Activated naive CD4-positive, alpha-beta T cell treated with anti-CD3 and anti-CD28 coated beads for 36 hours (primary cell): ENCODE measurements at regions of chr4 and their contacts with region 1.

Region 1: GRCh38 chr4:4524364-4524763 is 17.5 kb downstream of the STX18 start:
- DNase-seq: peak; percentile 23
- H3K4me3 Mint-ChIP-seq: no peak overlapping the region
- H3K27ac Mint-ChIP-seq: no peak overlapping the region
- H3K4me1 Mint-ChIP-seq: peaks cover 39% of the 10 kb centered on the region
- H3K27me3 Mint-ChIP-seq: no peaks in the 10 kb centered on the region

Region 2: GRCh38 chr4:2574863-2575262 is 1949.5 kb before region 1 on chr4:
- CTCF ChIA-PET with region 1: no interaction called
- intact Hi-C with region 1: no loop called
- DNase-seq: no peak
- H3K4me3 Mint-ChIP-seq: no peak overlapping the region
- H3K27ac Mint-ChIP-seq: no peak overlapping the region
- H3K4me1 Mint-ChIP-seq: peaks cover 45% of the 10 kb centered on the region
- H3K27me3 Mint-ChIP-seq: no peaks in the 10 kb centered on the region

Region 3: GRCh38 chr4:4362991-4363697 is 161.2 kb before region 1 on chr4:
- CTCF ChIA-PET with region 1: no interaction called
- intact Hi-C with region 1: no loop called
- DNase-seq: no peak
- H3K4me3 Mint-ChIP-seq: no peak overlapping the region
- H3K27ac Mint-ChIP-seq: no peak overlapping the region
- H3K4me1 Mint-ChIP-seq: no peaks in the 10 kb centered on the region
- H3K27me3 Mint-ChIP-seq: peaks cover 3% of the 10 kb centered on the region

Region 4: GRCh38 chr4:4535590-4535989 is 11.2 kb after region 1 on chr4:
- CTCF ChIA-PET with region 1: interaction called, 10 read pairs
- intact Hi-C with region 1: no loop called
- DNase-seq: no peak
- H3K4me3 Mint-ChIP-seq: no peak overlapping the region
- H3K27ac Mint-ChIP-seq: no peak overlapping the region
- H3K4me1 Mint-ChIP-seq: peaks cover 27% of the 10 kb centered on the region
- H3K27me3 Mint-ChIP-seq: no peaks in the 10 kb centered on the region

Region 5: DNA sequence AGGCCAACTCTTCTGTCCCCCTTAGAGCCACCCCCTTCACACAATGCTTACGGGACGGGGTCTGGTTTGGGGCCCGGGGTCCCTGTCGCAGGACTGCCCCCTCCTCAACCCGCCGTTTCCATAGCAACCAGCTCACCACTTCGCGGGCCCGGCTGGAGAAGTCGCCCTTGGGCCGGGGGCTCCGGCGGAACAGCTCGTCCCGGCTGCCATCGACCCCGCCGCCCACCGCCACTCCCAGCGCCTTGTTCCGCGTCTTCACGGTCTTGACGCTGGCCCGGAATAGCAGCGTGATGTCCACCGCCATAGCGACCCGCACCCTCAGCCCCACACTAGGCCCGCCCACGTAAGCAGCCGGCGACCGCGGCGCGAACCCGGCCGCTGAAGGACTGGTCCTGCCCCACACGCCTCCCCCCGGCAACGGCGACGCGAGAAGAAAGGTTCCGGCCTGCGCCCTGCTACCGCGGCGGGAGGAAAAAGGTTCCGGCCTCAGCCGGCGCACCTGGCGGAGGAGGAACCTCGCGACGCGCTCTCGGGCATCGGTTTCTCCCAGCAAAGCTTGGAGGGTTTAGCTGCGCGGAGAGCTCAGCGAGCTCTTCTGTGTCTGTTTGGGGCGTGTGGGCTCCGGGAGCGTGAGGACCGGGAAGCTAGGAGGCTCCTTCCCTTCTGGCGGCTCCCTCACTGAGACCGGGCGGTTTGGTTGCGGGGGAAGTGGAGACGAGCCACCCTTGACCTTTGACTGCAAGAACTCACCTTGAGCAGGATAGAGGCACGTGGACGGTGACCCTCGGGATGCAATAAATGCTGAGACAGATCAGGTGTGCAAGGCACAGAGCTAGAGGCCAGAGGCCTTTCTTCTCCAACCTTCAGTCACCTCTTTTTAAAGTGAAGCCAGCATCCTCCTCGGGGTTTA is 17.6 kb after region 1 on chr4 and contains the start of gene STX18:
- CTCF ChIA-PET with region 1: interaction called, 10 read pairs
- intact Hi-C with region 1: loop called (anchors 1 kb)
- DNase-seq: peak; percentile 89
- H3K4me3 Mint-ChIP-seq: peak within 1 kb of the TSS; percentile 92
- H3K27ac Mint-ChIP-seq: peak within 1 kb of the TSS; percentile 87
- H3K4me1 Mint-ChIP-seq: peaks cover 43% of the 10 kb centered on the region
- H3K27me3 Mint-ChIP-seq: no peaks in the 10 kb centered on the region
- total RNA-seq, gene STX18: 18.3 to 19.0 TPM

Region 6: DNA sequence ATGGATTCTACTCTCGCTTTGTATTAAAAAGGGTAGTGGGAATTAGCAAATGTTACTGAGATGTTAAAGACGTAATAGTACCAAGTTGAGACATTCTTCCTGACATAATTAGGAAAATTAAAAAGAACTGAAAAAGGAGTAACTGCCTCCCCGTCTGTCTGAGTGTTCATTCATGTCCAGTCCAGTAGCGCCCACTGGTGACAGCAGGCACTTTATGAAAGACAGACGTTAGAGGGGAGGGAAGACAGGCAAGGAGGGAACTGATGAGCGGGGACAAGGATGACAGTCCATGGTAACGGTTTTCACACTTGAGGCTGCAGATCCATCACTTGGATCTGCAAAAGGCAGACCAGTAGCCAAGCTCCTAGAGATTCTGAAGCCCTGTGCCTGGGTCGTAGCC is 853.6 kb after region 1 on chr4:
- CTCF ChIA-PET with region 1: no interaction called
- intact Hi-C with region 1: no loop called
- DNase-seq: peak; percentile 6
- H3K4me3 Mint-ChIP-seq: no peak overlapping the region
- H3K27ac Mint-ChIP-seq: no peak overlapping the region
- H3K4me1 Mint-ChIP-seq: no peaks in the 10 kb centered on the region
- H3K27me3 Mint-ChIP-seq: peaks cover 3% of the 10 kb centered on the region